ENCODE measurements at regions of chr1 and their contacts with region 1.

Region 1: DNA sequence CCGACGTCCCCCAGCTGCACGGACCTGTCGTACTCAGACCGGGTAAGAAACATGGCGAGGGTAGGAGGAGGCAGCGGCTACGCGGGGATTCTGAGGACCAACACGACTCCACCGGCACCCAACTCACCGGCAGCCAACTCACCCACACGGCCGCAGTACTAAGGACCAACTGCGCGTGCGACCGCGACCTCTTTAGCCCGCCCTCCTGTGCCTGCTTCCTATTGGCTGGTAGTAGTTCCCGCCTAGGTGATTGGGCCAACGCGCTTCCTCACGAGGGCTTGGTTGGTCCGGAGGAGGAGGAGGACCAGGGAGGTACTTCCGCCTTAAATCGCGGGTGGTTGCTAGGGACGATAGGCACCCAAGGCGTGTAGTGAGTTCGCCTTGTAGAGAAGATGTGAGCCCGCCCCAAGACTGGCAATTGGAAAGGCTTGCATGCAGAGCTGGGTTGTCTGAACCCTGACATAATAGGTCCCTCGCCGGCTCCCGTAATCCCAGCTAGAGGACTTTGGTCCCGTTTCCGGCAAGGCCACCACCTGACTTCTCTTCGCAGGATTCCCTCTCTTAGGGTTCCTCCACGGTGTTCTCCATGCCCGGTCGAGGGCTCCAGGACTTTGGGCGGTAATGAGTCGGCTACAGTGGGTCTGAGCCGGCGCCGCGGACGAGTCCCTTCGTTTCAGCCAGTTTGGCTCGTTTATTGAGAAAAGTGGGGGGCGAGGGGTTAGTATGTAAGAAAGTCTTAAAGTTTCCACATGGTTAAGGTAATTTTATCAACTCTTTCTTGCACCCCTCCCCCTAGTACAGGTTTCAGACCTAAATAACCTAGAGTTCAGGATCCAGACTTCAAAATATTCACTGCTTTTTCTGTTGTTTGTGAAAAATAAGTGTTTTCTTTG is at the start of gene PSMA5:
- DNase-seq: peak; percentile 94
- H3K4me3 Mint-ChIP-seq: peak within 1 kb of the TSS; percentile 97
- H3K27ac Mint-ChIP-seq: peak within 1 kb of the TSS; percentile 96
- H3K4me1 Mint-ChIP-seq: peaks cover 44% of the 10 kb centered on the region
- H3K27me3 Mint-ChIP-seq: peaks cover under 1% of the 10 kb centered on the region
- total RNA-seq, gene PSMA5: 241 and 283 TPM in 2 replicates

Region 2: GRCh38 chr1:109213785-109214468 is 212.6 kb before region 1 on chr1 and contains the start of gene SARS1:
- intact Hi-C with region 1: loop called (anchors 1 kb)
- DNase-seq: peak; percentile 88
- H3K4me3 Mint-ChIP-seq: peak within 1 kb of the TSS; percentile 94
- H3K27ac Mint-ChIP-seq: peak within 1 kb of the TSS; percentile 94
- H3K4me1 Mint-ChIP-seq: peaks cover 37% of the 10 kb centered on the region
- H3K27me3 Mint-ChIP-seq: peaks cover 3% of the 10 kb centered on the region
- total RNA-seq, gene SARS1: 147 and 154 TPM in 2 replicates

Region 3: DNA sequence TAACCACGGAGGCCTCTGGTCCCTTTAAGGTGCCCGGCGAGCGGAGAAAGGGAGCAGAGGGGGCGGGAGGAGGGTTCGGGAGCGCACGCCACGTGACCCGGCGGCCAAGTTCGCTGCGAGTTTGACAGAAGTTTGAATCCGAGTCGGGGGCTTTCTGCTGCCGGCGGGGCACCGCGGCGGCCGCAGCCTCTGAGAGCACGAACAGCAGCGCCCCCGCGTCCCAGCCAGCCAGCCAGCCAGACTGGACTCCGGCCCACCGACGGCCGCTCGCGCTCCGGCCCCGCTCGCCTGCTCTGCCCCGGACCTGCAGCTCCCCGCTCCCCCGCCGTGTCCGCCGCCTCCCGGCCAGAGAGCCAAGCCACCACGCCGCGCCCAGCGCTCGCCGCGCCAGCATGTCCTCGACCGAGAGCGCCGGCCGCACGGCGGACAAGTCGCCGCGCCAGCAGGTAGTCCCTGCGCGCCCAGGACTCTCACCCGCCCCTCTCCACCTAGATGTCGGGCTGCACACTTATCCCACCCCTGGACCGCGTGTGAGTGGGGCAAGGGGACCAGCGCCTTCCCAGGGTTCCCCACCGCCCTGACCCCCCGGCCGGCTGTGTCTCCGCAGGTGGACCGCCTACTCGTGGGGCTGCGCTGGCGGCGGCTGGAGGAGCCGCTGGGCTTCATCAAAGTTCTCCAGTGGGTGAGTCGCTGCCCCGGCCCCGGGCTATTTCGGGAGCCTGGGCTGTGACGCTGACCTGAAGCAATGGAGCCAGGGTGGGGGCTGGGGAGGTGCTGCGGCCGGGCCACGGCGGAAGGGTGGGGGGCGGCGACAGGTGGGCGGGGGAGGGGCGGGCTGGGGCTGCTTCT is 40.2 kb after region 1 on chr1 and contains the start of gene SYPL2:
- intact Hi-C with region 1: loop called (anchors 5 kb)
- DNase-seq: no peak
- H3K4me3 Mint-ChIP-seq: peak within 1 kb of the TSS; percentile 72
- H3K27ac Mint-ChIP-seq: no peak within 1 kb of the TSS
- H3K4me1 Mint-ChIP-seq: no peaks in the 10 kb centered on the region
- H3K27me3 Mint-ChIP-seq: peaks cover 84% of the 10 kb centered on the region
- total RNA-seq, gene SYPL2: not detected in 2 replicates

Region 4: GRCh38 chr1:109521002-109521951 is 94.8 kb after region 1 on chr1:
- intact Hi-C with region 1: no loop called
- DNase-seq: no peak
- H3K4me3 Mint-ChIP-seq: no peak overlapping the region
- H3K27ac Mint-ChIP-seq: no peak overlapping the region
- H3K4me1 Mint-ChIP-seq: no peaks in the 10 kb centered on the region
- H3K27me3 Mint-ChIP-seq: peaks cover 15% of the 10 kb centered on the region

Region 5: DNA sequence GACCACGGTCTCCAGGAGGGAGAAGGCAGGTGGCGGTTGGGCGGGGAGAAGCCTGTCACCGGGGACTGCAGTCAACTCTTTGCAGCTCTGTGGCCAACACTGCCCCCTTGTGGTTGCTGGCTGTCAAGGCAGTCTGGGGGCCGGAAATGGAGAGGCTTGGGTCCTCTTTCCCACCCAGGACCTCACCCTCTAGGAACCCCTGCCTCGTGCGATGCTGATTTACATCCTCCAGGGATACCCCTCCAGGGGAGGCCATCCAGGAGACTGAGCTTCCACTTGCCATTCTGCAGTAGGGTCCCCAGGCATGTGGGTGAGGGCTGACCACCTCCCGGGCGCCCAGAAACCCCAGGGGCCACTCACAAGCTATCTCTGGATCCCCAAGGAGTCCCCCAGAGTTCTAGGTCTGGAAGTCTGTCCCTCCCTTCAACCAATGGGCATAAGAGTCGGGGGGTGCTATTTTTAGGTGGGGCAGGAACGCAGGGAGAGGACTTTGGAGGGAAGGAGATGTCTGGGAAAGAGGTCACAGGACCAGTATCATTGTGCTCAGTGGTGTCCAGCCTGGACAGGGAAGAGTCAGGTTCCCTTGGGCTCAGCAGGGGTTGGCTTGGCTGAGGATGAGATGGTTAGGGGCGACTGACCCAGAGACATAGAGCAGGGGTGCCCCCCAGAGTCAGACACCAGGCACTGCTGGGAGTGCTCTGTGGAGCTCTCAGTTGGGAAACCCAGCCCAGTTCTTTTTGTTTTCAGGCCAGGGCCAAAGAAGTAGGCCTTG is 106.0 kb after region 1 on chr1:
- intact Hi-C with region 1: loop called (anchors 1 kb)
- DNase-seq: peak; percentile 85
- H3K4me3 Mint-ChIP-seq: peak overlapping the region; percentile 53
- H3K27ac Mint-ChIP-seq: peak overlapping the region; percentile 86
- H3K4me1 Mint-ChIP-seq: peaks cover 24% of the 10 kb centered on the region
- H3K27me3 Mint-ChIP-seq: no peaks in the 10 kb centered on the region

Region 6: DNA sequence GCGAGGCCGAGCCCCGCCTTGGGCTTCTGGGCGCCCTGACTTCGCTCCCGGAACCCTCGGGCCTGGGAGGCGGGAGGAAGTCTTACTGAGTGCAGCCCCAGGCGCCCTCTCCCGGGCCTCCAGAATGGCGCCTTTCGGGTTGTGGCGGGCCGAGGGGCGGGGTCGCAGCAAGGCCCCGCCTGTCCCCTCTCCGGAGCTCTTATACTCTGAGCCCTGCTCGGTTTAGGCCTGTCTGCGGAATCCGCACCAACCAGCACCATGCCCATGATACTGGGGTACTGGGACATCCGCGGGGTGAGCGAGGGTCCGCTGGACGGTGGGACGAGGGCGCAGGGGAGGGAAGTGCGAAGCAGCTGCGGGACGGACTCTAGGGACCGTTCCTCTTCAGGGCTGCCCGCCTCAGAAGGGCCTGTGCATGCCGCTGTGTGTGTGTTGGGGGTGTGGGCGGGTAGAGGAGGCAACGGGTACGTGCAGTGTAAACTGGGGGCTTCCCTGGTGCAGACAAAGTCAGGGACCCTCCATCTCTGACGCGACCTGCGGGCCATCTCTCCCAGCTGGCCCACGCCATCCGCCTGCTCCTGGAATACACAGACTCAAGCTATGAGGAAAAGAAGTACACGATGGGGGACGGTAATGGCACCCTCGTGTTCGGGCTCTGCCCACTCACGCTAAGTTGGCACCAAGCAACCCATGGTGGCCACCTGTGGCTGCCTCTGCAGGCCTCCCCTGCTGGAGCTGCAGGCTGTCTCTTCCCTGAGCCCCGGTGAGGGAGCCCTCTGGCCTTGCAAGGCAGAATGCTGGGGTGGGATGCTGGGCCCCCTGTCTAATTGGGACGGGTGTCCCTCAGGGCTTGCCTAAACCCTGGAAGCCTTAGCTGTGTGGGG is 261.3 kb after region 1 on chr1 and contains the start of gene GSTM1:
- intact Hi-C with region 1: loop called (anchors 5 kb)
- DNase-seq: peak; percentile 86
- H3K4me3 Mint-ChIP-seq: peak within 1 kb of the TSS; percentile 93
- H3K27ac Mint-ChIP-seq: peak within 1 kb of the TSS; percentile 98
- H3K4me1 Mint-ChIP-seq: peaks cover 20% of the 10 kb centered on the region
- H3K27me3 Mint-ChIP-seq: peaks cover 4% of the 10 kb centered on the region
- total RNA-seq, gene GSTM1: 77.4 and 86.4 TPM in 2 replicates

Region 7: GRCh38 chr1:110034451-110035235 is 608.1 kb after region 1 on chr1 and contains the start of gene STRIP1:
- intact Hi-C with region 1: loop called (anchors 1 kb)
- DNase-seq: peak; percentile 91
- H3K4me3 Mint-ChIP-seq: peak within 1 kb of the TSS; percentile 95
- H3K27ac Mint-ChIP-seq: peak within 1 kb of the TSS; percentile 85
- H3K4me1 Mint-ChIP-seq: peaks cover 54% of the 10 kb centered on the region
- H3K27me3 Mint-ChIP-seq: no peaks in the 10 kb centered on the region
- total RNA-seq, gene STRIP1: 41.5 and 43.7 TPM in 2 replicates